HCT116 (cell line): ENCODE measurements at regions of chr6 and their contacts with region 1.

Region 1: DNA sequence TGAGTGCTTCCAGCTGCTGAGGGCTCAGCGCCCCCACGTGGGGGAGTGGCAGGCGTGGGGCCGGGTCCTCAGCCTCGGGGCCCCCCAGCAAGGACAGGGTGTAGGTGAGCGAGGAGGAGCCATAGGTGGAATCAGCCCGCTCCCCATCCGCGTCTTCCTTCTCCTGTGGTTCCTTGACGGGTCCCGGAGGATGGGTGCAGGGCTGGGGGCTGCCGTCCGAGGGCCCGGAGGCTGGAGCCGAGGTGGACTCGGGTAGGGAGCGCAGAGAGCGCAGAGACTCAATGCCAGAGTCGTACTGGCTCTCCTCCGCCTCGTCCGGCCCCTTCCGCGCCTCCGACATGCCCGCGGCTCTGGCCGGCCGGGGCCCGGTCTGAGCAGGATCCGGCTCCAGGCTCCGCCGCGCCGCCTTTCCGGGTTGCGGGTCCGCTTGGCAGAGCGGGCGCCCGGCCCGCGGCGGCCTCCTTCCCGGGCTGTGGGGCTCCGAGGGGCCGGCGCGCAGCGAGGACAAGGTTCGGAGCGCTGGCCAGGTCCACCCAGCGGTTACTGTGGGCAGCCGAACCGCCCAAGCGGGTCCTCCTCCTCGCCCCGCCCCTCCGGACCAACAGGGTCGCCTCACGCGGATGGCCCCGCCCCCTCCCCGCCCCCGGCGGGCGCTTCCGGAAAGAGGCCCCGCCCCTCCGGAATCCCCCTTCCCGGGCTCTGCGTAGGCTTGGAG is at the start of gene NFKBIE:
- DNase-seq: peak; percentile 68
- ATAC-seq: peak; percentile 83
- H3K4me3 ChIP-seq: peak within 1 kb of the TSS; percentile 88 to 92
- H3K27ac ChIP-seq: peak within 1 kb of the TSS; percentile 79
- H3K4me1 ChIP-seq: peaks cover 7 to 26% of the 10 kb centered on the region in 2 experiments
- H3K27me3 ChIP-seq: no peaks in the 10 kb centered on the region
- CTCF ChIP-seq: peak; percentile 15 to 41 (median 35); a peak in 3 of 6 replicates
- POLR2A ChIP-seq: peak; percentile 72
- RAD21 ChIP-seq: peak; percentile 50; the same call in 1 of the 2 replicates
- total RNA-seq, gene NFKBIE: 7.6 TPM

Region 2: GRCh38 chr6:44304282-44305199 is 39.4 kb after region 1 on chr6:
- CTCF ChIA-PET with region 1: interaction called, 18 read pairs
- POLR2A ChIA-PET with region 1: no interaction called
- RAD21 ChIA-PET with region 1: interaction called, 3 to 4 read pairs
- intact Hi-C with region 1: loop called (anchors 1 kb)
- DNase-seq: peak; percentile 10
- ATAC-seq: peak; percentile 76
- H3K4me3 ChIP-seq: no peak overlapping the region
- H3K27ac ChIP-seq: no peak overlapping the region
- H3K4me1 ChIP-seq: no peaks in the 10 kb centered on the region
- H3K27me3 ChIP-seq: no peaks in the 10 kb centered on the region
- CTCF ChIP-seq: peak; percentile 46 to 87 (median 85); a peak in 5 of 6 replicates
- POLR2A ChIP-seq: no peak
- RAD21 ChIP-seq: peak; percentile 52

Region 3: GRCh38 chr6:44338228-44339122 is 73.3 kb after region 1 on chr6:
- CTCF ChIA-PET with region 1: interaction called, 36 read pairs
- POLR2A ChIA-PET with region 1: interaction called, 6 read pairs
- RAD21 ChIA-PET with region 1: interaction called in 1 of 2 experiments, 3 read pairs
- intact Hi-C with region 1: loop called (anchors 1 kb)
- DNase-seq: peak; percentile 54
- ATAC-seq: peak; percentile 97
- H3K4me3 ChIP-seq: no peak overlapping the region
- H3K27ac ChIP-seq: no peak overlapping the region
- H3K4me1 ChIP-seq: no peaks in the 10 kb centered on the region
- H3K27me3 ChIP-seq: no peaks in the 10 kb centered on the region
- CTCF ChIP-seq: peak; percentile 68 to 91 (median 87)
- POLR2A ChIP-seq: no peak
- RAD21 ChIP-seq: peak; percentile 95

Region 4: DNA sequence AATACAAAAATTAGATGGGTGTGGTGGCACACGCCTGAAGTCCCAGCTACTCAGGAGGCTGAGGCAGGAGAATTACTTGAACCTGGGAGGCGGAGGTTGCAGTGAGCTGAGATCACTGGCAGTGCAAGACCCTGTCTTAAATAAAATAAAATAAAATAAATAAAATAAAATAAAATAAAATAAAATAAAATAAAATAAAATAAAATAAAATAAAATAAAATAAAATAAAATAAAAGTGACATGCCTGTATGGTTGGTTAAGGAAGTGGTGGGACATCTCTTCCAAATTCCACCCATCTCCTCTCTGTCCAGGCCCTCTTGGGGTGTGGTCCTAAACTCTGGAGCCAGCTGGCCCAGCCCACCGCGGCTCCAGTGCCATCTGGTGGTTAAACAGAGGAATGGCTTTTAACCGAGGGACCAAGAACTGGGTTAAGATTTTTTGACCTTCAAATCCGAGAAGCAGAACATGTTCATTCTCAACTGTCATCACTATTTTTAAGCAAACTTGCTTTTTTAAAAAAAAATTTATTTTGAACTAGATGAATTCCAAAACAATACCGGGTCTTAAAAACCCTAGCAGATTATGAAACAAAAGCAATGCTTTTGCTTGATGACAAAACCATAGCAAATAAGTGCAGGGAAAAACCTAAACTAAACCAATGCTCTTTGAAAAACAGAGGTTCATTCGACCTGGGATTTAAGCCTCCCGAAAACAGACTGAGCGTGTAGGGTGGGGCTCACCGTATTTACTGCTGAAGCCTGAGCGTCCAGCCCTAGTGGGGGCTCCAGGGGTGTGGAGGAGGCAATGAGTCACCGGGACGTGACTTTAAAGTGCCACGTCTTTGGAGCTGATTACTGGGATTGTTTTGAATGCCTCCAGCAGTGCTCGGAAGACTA is 191.2 kb after region 1 on chr6:
- CTCF ChIA-PET with region 1: interaction called, 5 read pairs
- POLR2A ChIA-PET with region 1: no interaction called
- RAD21 ChIA-PET with region 1: no interaction called
- intact Hi-C with region 1: loop called (anchors 5 kb)
- DNase-seq: peak; percentile 41
- ATAC-seq: peak; percentile 90
- H3K4me3 ChIP-seq: peak overlapping the region; percentile 21 to 44; a peak in 3 of 4 replicates
- H3K27ac ChIP-seq: no peak overlapping the region
- H3K4me1 ChIP-seq: peaks cover 8 to 15% of the 10 kb centered on the region in 2 experiments; a peak in 3 of 4 replicates
- H3K27me3 ChIP-seq: no peaks in the 10 kb centered on the region
- CTCF ChIP-seq: peak; percentile 71 to 89 (median 81)
- POLR2A ChIP-seq: no peak
- RAD21 ChIP-seq: peak; percentile 75

Region 5: DNA sequence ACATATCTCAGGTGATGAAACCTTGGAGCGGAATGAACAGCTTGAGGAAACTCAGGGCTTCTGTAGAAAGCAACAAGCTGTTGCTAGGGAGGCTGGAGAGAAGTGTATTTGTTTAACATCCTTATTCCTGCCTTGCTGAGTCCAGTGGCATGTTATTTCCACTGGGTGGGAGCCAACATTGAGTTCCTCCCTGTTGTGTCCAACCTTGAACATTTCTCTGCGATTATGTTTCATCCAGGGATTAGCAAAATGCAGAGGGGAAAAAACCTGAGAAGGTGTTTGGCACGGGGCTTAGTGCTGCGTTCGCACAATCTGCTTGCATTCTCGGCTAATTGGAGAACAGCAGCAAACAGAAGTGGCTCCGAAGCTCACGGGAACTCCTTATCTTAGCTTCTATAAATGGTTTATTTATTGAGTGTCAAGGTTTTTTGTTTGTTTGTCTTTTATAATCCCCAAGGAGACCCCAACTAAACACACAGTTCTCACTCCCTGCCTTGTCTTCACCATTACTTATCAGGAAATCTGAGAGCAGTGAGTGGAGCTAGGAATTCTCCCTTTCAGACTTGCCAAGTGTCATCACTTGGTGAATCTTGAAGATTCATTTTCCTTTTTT is 535.1 kb after region 1 on chr6:
- CTCF ChIA-PET with region 1: no interaction called
- POLR2A ChIA-PET with region 1: no interaction called
- RAD21 ChIA-PET with region 1: no interaction called
- intact Hi-C with region 1: no loop called
- DNase-seq: no peak
- ATAC-seq: no peak
- H3K4me3 ChIP-seq: no peak overlapping the region
- H3K27ac ChIP-seq: no peak overlapping the region
- H3K4me1 ChIP-seq: no peaks in the 10 kb centered on the region
- H3K27me3 ChIP-seq: no peaks in the 10 kb centered on the region
- CTCF ChIP-seq: no peak
- POLR2A ChIP-seq: no peak
- RAD21 ChIP-seq: no peak